ENCODE measurements at regions of chr11 and their contacts with region 1.

Region 1: GRCh38 chr11:122853971-122854446 is 15.7 kb downstream of the CRTAM start:
- DNase-seq: peak; percentile 42
- H3K4me3 ChIP-seq: no peak overlapping the region
- CTCF ChIP-seq: peak; percentile 29

Region 2: GRCh38 chr11:122655527-122656072 is 198.4 kb before region 1 on chr11 and contains the start of gene UBASH3B:
- CTCF ChIA-PET with region 1: interaction called, 12 read pairs
- POLR2A ChIA-PET with region 1: no interaction called
- DNase-seq: no peak
- H3K4me3 ChIP-seq: peak within 1 kb of the TSS; percentile 81
- CTCF ChIP-seq: no peak

Region 3: DNA sequence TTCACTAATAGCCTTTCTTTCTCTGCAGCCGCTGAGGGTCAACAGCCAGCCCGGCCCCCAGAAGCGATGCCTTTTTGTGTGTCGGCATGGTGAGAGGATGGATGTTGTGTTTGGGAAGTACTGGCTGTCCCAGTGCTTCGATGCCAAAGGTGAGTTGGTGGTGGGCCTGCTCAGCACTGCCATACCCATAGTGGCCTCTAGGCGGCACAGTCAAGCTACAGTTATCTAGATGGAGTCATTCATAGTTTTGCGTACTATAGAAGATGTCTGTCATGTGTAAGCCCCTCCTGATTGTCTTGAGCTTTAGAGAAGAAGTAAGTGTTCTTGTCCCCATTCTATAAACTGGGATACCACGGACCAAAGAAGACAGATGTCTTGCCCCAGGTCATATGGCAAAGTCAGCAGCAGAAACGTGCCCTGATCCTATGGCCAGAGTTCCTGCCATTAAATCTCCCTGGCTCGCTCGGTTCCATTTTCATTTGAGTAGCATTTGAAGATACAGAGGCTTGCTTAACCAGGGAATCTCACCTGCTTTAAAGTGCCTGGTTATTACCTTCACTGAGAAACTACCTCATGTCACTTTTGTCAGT is 57.8 kb before region 1 on chr11:
- CTCF ChIA-PET with region 1: interaction called, 152 read pairs
- POLR2A ChIA-PET with region 1: no interaction called
- DNase-seq: no peak
- H3K4me3 ChIP-seq: no peak overlapping the region
- CTCF ChIP-seq: peak; percentile 87

Region 4: GRCh38 chr11:122822241-122822640 is 31.8 kb before region 1 on chr11:
- CTCF ChIA-PET with region 1: interaction called, 23 read pairs
- POLR2A ChIA-PET with region 1: no interaction called
- DNase-seq: no peak
- H3K4me3 ChIP-seq: no peak overlapping the region
- CTCF ChIP-seq: no peak

Region 5: DNA sequence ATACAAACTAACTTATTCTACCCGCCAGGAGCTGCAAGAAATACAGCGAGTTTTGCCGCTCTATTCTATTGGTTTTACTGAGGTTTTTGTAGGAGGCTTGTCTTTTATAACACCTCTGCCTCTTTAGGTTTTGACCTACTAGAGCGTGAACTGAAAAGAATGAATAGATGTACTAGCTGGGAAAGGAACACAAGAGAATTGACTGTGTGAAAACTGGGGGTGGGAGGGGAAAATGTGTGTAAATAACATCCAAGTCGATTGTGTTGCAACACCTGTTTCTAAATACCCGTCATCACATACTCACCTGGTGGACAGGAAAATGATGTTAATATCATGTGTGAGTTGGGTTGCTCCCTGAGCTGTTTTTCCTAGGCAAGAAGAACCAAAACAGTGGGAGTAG is 15.6 kb after region 1 on chr11:
- CTCF ChIA-PET with region 1: interaction called, 73 read pairs
- POLR2A ChIA-PET with region 1: no interaction called
- DNase-seq: no peak
- H3K4me3 ChIP-seq: no peak overlapping the region
- CTCF ChIP-seq: no peak

Region 6: DNA sequence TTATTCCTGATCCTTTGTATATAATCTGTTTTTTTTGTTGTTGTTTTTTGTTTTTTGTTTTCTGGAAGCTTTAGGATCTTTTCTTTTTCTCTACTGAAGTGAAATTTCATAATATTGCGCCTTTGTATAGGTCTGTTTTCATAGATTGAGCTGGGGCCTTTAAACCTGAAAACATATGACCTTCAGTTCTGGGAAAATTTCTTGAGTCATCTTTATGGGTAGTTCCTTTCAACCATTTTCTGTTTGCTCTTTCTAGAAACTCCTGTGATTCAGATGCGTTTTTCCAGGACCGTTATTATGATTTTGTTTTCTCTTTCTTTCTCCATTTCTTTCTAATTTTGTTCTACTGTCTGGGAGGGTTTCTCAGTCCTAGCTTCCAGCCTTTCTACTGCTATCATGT is 84.0 kb after region 1 on chr11:
- CTCF ChIA-PET with region 1: no interaction called
- POLR2A ChIA-PET with region 1: no interaction called
- DNase-seq: no peak
- H3K4me3 ChIP-seq: no peak overlapping the region
- CTCF ChIP-seq: no peak

Region 7: DNA sequence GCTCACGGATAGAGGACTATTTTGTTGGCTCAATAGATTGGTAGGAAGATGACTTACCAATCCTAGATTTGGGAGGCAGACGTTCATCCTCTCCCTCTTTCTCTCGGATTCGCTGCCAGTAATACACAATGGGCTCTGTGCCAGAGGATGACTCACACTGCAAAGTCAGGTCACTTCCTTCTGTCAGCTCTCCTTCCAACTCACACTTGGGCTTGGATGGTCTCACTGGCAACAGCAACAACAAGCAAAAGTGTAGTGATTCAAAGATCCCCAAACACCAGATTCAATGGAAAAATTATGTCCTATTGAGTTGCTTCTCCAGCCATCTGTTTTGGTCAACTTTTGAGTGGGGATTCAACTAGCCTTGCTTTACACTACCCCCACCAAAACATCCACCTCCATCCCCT is 229.6 kb after region 1 on chr11:
- CTCF ChIA-PET with region 1: no interaction called
- POLR2A ChIA-PET with region 1: no interaction called
- DNase-seq: peak; percentile 82
- H3K4me3 ChIP-seq: no peak overlapping the region
- CTCF ChIP-seq: no peak

Measured in AG04449 (cell line).